GM18951 (cell line): ENCODE measurements at regions of chr7 and their contacts with region 1.

Region 1: GRCh38 chr7:31744294-31744874 is 57.4 kb downstream of the PPP1R17 start:
- POLR2A ChIP-seq: no peak

Region 2: GRCh38 chr7:31466036-31466435 is 278.3 kb before region 1 on chr7:
- in situ Hi-C with region 1: loop called (anchors 25 kb)
- POLR2A ChIP-seq: no peak

Region 3: DNA sequence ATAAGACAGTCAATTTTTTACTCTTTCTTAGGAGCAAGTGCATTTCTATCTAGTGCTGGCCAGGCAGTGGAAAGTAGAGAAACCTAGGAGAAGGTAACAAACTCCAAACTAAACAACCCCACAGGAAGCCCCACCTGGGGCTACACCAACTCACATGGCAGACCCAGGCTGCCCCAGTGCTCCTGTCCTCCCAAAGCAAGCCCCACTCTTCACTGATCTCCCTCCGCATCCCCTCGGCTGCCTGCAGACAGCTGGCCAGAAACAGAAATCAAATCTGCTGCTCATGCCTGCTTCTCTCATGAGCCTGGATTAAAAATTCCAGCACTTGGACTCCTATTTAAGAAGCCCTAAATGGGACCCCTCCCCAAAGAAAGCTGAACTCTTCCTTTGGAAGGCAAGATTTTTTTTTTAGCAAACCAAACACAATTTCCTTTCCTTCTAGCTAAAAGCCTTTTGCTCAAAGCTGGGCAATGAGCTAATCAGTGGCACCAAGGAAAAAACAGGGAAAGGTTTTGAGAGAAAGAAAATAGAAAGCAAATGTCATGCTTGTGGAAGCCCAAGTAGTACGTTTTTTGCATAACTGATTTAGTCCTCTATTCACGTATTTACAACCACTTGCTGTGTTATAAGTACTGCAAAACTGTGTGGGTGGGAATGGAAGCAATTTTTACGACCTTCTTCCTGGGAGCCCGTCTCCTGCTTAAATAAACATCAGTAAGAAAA is 315.1 kb after region 1 on chr7:
- in situ Hi-C with region 1: loop called (anchors 10 kb)
- POLR2A ChIP-seq: no peak

Region 4: DNA sequence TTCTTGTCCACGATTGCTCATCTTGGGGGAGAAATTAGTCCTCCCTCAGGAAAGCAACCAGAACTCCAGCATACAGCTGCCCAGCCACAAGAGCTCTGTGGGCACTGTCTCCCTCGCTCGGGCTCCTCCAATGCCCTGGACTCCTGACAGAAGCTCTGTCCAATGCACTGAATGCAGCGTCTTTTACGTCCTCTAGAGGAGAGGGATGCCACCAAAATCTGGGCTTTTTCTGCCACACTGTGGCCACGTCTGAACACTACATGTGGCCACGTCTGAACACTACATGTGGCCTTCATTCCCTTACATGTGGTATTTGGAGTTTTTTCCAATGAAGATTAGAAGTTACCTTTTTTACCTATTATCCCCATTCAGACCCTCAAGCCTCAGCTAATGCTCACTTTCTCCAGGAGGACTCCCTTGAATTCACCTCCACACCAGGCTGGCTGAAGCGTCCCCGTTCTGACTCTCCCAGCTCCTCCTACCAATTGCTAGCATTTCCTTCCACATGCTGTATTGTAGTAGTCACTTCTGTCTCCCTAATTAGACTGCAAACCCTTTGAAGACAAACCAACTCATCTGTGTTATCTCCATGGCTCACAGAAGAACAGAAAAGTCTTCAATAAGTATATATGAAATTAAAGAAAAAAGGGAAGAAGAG is 460.1 kb after region 1 on chr7:
- in situ Hi-C with region 1: loop called (anchors 10 kb)
- POLR2A ChIP-seq: no peak

Region 5: DNA sequence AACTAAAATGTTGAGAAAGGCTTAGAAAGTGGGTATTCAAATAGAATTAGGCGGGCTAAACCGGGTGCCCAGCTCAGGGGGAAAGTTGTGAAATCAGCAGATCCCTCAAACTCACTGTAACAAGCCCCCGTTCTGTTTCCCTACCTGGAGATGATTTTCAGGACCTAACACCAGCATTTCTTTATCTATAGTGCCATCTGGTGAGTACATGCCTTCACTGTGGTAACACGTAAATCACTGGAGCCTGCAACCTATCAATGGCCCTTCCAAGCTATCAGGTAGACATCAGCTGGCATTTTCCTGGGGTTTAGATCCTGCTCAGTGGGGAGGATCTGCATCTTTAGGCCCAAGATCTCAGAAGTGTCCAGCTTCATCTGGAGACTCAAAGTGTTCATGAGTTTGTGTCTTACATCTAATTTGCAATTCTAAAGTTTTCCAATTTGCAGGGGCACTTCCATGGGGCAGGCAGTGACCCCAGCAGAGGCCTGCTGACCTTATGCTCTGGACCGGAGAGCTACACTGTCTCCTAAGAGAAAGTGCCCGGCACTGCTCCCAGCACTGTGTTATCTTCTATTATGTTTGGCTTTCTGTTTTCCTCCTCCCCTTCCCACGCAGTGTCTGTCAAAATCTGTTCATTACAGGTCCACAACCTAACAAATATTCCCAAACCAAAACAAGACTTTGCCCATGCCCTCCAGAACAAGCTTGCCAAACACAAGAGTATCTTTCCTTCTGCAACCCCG is 613.3 kb after region 1 on chr7:
- in situ Hi-C with region 1: loop called (anchors 25 kb)
- POLR2A ChIP-seq: no peak